Endothelial cell of umbilical vein (primary cell): ENCODE measurements at regions of chr6 and their contacts with region 1.

Region 1: DNA sequence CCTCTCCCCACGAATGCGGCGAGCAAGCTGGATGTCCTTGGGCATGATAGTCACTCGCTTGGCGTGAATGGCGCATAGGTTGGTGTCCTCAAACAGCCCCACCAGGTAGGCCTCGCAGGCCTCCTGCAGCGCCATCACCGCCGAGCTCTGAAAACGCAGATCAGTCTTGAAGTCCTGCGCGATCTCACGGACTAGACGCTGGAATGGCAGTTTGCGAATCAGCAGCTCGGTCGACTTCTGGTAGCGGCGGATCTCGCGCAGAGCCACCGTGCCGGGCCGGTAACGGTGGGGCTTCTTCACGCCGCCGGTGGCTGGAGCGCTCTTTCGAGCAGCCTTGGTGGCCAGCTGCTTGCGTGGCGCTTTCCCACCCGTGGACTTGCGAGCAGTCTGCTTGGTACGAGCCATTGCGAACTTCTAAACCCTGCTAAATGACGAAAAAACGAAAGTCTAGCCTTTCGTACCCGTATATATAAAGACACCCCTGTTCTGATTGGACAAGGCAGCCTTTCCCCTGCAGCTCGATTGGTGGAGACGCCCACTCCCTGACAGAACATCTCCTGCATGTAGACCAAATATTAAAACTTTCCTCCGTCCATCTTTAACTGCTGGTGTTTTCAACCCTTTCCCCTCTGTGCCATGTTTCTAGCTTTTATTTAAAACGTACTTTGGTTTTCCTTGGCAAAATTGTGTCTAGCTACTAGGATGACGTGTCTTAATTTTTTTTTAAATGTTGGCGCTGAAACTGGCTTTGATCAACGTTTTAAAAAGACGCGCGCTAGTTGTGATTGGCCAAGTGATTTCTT is 109.8 kb downstream of the HFE start:
- DNase-seq: peak; percentile 96
- H3K4me3 ChIP-seq: peak overlapping the region; percentile 1 to 98 (median 52)
- H3K27ac ChIP-seq: peak overlapping the region; percentile 94
- H3K4me1 ChIP-seq: peaks cover 19% of the 10 kb centered on the region
- H3K27me3 ChIP-seq: no peaks in the 10 kb centered on the region
- CTCF ChIP-seq: no peak
- POLR2A ChIP-seq: peak; percentile 97

Region 2: GRCh38 chr6:26054857-26055669 is 142.0 kb before region 1 on chr6:
- CTCF ChIA-PET with region 1: no interaction called
- POLR2A ChIA-PET with region 1: no interaction called
- dilution Hi-C with region 1: no loop called
- intact Hi-C with region 1: loop called (anchors 2 kb)
- DNase-seq: peak; percentile 94
- H3K4me3 ChIP-seq: peak overlapping the region; percentile 62 to 74 (median 65)
- H3K27ac ChIP-seq: peak overlapping the region; percentile 98
- H3K4me1 ChIP-seq: peaks cover 13% of the 10 kb centered on the region
- H3K27me3 ChIP-seq: no peaks in the 10 kb centered on the region
- CTCF ChIP-seq: no peak
- POLR2A ChIP-seq: peak; percentile 98

Region 3: GRCh38 chr6:26103770-26104456 is 93.1 kb before region 1 on chr6:
- CTCF ChIA-PET with region 1: no interaction called
- POLR2A ChIA-PET with region 1: no interaction called
- dilution Hi-C with region 1: no loop called
- intact Hi-C with region 1: loop called (anchors 1 kb)
- DNase-seq: peak; percentile 97
- H3K4me3 ChIP-seq: peak overlapping the region; percentile 32 to 46 (median 34)
- H3K27ac ChIP-seq: peak overlapping the region; percentile 87
- H3K4me1 ChIP-seq: peaks cover 18% of the 10 kb centered on the region
- H3K27me3 ChIP-seq: peaks cover 0 to 4% of the 10 kb centered on the region in 2 experiments
- CTCF ChIP-seq: peak; percentile 31 to 57
- POLR2A ChIP-seq: peak; percentile 99

Region 4: GRCh38 chr6:26175428-26176181 is 21.4 kb before region 1 on chr6:
- CTCF ChIA-PET with region 1: interaction called, 16 read pairs
- POLR2A ChIA-PET with region 1: interaction called, 9 read pairs
- dilution Hi-C with region 1: no loop called
- intact Hi-C with region 1: loop called (anchors 1 kb)
- DNase-seq: peak; percentile 85
- H3K4me3 ChIP-seq: no peak overlapping the region
- H3K27ac ChIP-seq: no peak overlapping the region
- H3K4me1 ChIP-seq: peaks cover 11% of the 10 kb centered on the region
- H3K27me3 ChIP-seq: no peaks in the 10 kb centered on the region
- CTCF ChIP-seq: peak; percentile 46 to 51
- POLR2A ChIP-seq: no peak

Region 5: GRCh38 chr6:26183581-26184366 is 13.3 kb before region 1 on chr6:
- CTCF ChIA-PET with region 1: interaction called, 25 read pairs
- POLR2A ChIA-PET with region 1: interaction called, 61 read pairs
- dilution Hi-C with region 1: no loop called
- intact Hi-C with region 1: no loop called
- DNase-seq: peak; percentile 93
- H3K4me3 ChIP-seq: peak overlapping the region; percentile 13 to 66 (median 34)
- H3K27ac ChIP-seq: peak overlapping the region; percentile 58
- H3K4me1 ChIP-seq: peaks cover 20% of the 10 kb centered on the region
- H3K27me3 ChIP-seq: no peaks in the 10 kb centered on the region
- CTCF ChIP-seq: no peak
- POLR2A ChIP-seq: peak; percentile 59

Region 6: GRCh38 chr6:26383624-26384417 is 186.8 kb after region 1 on chr6:
- CTCF ChIA-PET with region 1: no interaction called
- POLR2A ChIA-PET with region 1: no interaction called
- dilution Hi-C with region 1: no loop called
- intact Hi-C with region 1: no loop called
- DNase-seq: peak; percentile 41
- H3K4me3 ChIP-seq: peak overlapping the region; percentile 59 to 87 (median 67)
- H3K27ac ChIP-seq: peak overlapping the region; percentile 56
- H3K4me1 ChIP-seq: peaks cover 7% of the 10 kb centered on the region
- H3K27me3 ChIP-seq: no peaks in the 10 kb centered on the region
- CTCF ChIP-seq: no peak
- POLR2A ChIP-seq: no peak